ENCODE measurements at regions of chr20 and their contacts with region 1.

Region 1: GRCh38 chr20:37378785-37379598 is 33.1 kb downstream of the SRC start:
- DNase-seq: peak; percentile 55 to 95
- ATAC-seq: peak; percentile 53 to 69
- H3K4me3 ChIP-seq: no peak overlapping the region
- H3K27ac ChIP-seq: peak overlapping the region; percentile 96 to 98
- H3K4me1 ChIP-seq: peaks cover 78% of the 10 kb centered on the region
- CTCF ChIP-seq: no peak
- EP300 ChIP-seq: peak; percentile 72 to 87; a peak in 3 of 5 replicates
- POLR2A ChIP-seq: no peak
- RAD21 ChIP-seq: peak in 1 of 2 experiments; percentile 31; a peak in 3 of 5 replicates

Region 2: GRCh38 chr20:37288091-37288490 is 90.9 kb before region 1 on chr20:
- CTCF ChIA-PET with region 1: interaction called, 113 read pairs
- POLR2A ChIA-PET with region 1: interaction called, 10 read pairs
- DNase-seq: no peak
- ATAC-seq: no peak
- H3K4me3 ChIP-seq: no peak overlapping the region
- H3K27ac ChIP-seq: no peak overlapping the region; a peak in 1 of 6 replicates
- H3K4me1 ChIP-seq: peaks cover 17% of the 10 kb centered on the region
- CTCF ChIP-seq: no peak
- EP300 ChIP-seq: no peak
- POLR2A ChIP-seq: no peak
- RAD21 ChIP-seq: no peak

Region 3: DNA sequence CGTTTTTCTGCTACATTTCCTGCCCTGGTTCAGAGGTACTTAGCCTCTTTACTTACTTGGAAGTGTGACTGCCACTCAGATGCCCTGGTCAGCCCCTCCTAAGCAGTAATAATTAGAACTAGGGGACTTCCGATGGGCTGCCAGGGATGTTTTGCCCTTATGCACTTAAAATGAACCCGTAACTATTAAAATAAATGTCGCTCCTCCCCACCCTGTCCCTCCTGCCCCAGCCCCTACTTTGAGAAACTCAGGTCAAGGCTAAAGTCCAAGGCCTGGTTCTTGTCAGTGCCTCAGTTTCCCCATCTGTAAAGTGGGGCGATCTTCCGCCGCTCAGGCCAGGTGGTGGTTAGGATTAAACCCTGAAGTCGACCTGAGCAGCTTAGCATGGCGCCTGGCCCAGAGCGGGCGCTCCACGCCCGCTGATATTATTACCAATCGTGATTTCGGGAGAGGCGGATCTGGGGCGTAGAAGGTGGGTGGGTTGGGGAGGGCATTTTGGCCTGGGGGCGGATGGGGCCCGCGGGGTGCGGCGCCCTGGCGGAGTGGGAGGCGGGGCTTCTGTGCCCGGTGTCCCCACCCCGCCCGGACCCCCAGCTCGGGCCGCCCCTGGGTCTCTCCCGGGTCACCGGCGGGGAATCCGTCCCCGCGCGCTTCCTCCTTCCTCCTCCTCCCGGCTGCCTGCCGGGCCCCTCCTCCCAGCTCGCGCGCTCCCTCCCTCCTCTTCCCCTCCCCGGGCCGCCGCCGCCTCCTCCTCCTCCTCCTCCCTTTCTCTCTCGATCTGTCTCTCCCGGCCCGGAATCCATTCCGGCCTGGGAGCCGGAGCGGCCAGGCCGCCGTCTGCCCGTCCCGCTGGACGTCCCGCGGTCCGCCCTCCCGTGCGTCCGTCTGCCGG is 33.4 kb before region 1 on chr20 and contains the start of gene SRC:
- CTCF ChIA-PET with region 1: interaction called, 28 read pairs
- POLR2A ChIA-PET with region 1: interaction called, 23 read pairs
- DNase-seq: peak; percentile 68 to 83
- ATAC-seq: peak; percentile 54 to 70
- H3K4me3 ChIP-seq: peak within 1 kb of the TSS; percentile 89
- H3K27ac ChIP-seq: peak within 1 kb of the TSS; percentile 99 to 100
- H3K4me1 ChIP-seq: peaks cover 68% of the 10 kb centered on the region
- CTCF ChIP-seq: no peak
- EP300 ChIP-seq: no peak
- POLR2A ChIP-seq: peak; percentile 80
- RAD21 ChIP-seq: no peak; a peak in 2 of 5 replicates
- polyA plus RNA-seq, gene SRC: 154 and 212 TPM in 2 replicates

Region 4: DNA sequence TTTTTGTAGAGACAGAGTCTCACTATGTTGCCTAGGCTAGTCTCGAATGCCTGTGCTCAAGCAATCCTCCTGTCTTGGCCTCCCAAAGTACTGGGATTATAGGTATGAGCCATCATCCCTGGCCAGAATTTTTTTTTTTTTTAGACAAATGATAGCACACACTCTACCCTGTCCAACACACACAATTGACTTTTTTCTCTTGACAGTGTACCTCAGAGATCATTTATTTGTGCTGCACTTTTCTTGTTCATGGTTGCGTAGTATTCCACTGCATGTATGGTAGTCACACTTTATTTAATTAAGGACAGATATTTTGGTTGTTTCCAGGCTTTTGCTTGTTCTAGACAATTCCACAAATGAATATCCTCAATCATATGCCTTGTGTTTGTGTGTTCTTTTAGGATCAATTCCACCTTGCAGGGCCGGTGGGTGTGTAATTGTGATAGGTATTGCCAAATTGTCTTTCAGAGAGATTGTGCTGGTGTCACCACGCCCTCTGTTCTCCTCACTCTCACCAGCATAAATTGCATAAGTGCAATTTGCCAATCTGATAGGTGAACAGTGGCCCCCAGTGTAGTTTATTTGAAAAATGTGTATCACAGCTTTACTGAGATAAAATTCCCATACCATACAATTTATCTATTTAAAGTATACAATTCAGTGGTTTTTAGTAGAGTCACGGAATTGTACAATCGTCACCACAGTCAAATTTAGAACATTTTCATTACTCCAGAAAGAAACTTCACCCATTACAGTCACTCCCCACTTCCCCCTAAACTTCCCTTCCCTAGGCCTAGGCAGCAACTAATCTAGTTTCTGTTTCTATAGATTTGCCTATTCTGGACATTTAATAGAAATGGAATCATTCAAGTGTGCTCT is 13.0 kb before region 1 on chr20:
- CTCF ChIA-PET with region 1: interaction called, 18 read pairs
- POLR2A ChIA-PET with region 1: no interaction called
- DNase-seq: no peak
- ATAC-seq: no peak
- H3K4me3 ChIP-seq: no peak overlapping the region
- H3K27ac ChIP-seq: no peak overlapping the region
- H3K4me1 ChIP-seq: peaks cover 17% of the 10 kb centered on the region
- CTCF ChIP-seq: no peak
- EP300 ChIP-seq: no peak
- POLR2A ChIP-seq: no peak
- RAD21 ChIP-seq: no peak